IMR-90 (cell line): ENCODE measurements at regions of chr17 and their contacts with region 1.

Region 1: GRCh38 chr17:58417300-58418092 is at the start of gene RNF43:
- DNase-seq: peak; percentile 71
- ATAC-seq: peak; percentile 99
- H3K4me3 ChIP-seq: peak within 1 kb of the TSS; percentile 8
- H3K27ac ChIP-seq: no peak within 1 kb of the TSS
- H3K4me1 ChIP-seq: no peaks in the 10 kb centered on the region
- H3K27me3 ChIP-seq: peaks cover 16% of the 10 kb centered on the region
- CTCF ChIP-seq: peak; percentile 81
- POLR2A ChIP-seq: no peak
- RAD21 ChIP-seq: peak; percentile 70
- total RNA-seq, gene RNF43: under 0.01 TPM in 2 replicates

Region 2: GRCh38 chr17:58317421-58318064 is 100.0 kb before region 1 on chr17:
- CTCF ChIA-PET with region 1: interaction called, 21 read pairs
- POLR2A ChIA-PET with region 1: no interaction called
- dilution Hi-C with region 1: no loop called
- in situ Hi-C with region 1: loop called (anchors 5 kb)
- intact Hi-C with region 1: loop called (anchors 1 kb)
- DNase-seq: peak; percentile 75
- ATAC-seq: peak; percentile 90
- H3K4me3 ChIP-seq: no peak overlapping the region
- H3K27ac ChIP-seq: no peak overlapping the region
- H3K4me1 ChIP-seq: no peaks in the 10 kb centered on the region
- H3K27me3 ChIP-seq: no peaks in the 10 kb centered on the region
- CTCF ChIP-seq: peak; percentile 88
- POLR2A ChIP-seq: peak; percentile 42; the same call in 1 of the 2 replicates
- RAD21 ChIP-seq: peak; percentile 96

Region 3: DNA sequence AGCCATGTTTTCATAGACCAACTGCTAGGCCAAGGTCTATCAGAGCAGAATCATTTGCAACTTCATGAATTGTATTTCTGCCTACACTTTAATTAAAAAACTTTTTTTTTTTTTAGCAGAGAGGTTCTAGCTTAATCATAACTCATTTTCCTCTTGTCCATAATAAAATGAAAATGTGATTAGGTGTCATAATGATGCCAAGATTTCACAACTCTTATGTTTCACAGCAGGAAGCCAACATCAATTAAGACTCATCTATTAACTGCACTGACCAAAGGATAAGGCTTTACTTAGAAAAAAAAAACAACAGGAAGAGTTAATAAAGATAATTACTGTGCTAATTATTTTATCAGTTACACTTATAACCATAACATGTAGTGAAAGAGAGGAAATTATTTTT is 18.7 kb after region 1 on chr17:
- CTCF ChIA-PET with region 1: interaction called, 4 read pairs
- POLR2A ChIA-PET with region 1: interaction called, 10 read pairs
- dilution Hi-C with region 1: no loop called
- in situ Hi-C with region 1: no loop called
- intact Hi-C with region 1: no loop called
- DNase-seq: no peak
- ATAC-seq: no peak
- H3K4me3 ChIP-seq: no peak overlapping the region
- H3K27ac ChIP-seq: no peak overlapping the region
- H3K4me1 ChIP-seq: no peaks in the 10 kb centered on the region
- H3K27me3 ChIP-seq: no peaks in the 10 kb centered on the region
- CTCF ChIP-seq: no peak
- POLR2A ChIP-seq: no peak
- RAD21 ChIP-seq: no peak

Region 4: GRCh38 chr17:58513965-58514774 is 96.7 kb after region 1 on chr17 and contains the start of gene MTMR4:
- CTCF ChIA-PET with region 1: no interaction called
- POLR2A ChIA-PET with region 1: no interaction called
- dilution Hi-C with region 1: no loop called
- in situ Hi-C with region 1: no loop called
- intact Hi-C with region 1: no loop called
- DNase-seq: peak; percentile 58
- ATAC-seq: peak; percentile 57
- H3K4me3 ChIP-seq: peak within 1 kb of the TSS; percentile 64
- H3K27ac ChIP-seq: peak within 1 kb of the TSS; percentile 33; the same call in 1 of the 2 replicates
- H3K4me1 ChIP-seq: peaks cover 12% of the 10 kb centered on the region; the same call in 1 of the 2 replicates
- H3K27me3 ChIP-seq: no peaks in the 10 kb centered on the region
- CTCF ChIP-seq: no peak
- POLR2A ChIP-seq: no peak; the same call in 1 of the 2 replicates
- RAD21 ChIP-seq: no peak
- total RNA-seq, gene MTMR4: 42.5 and 60.0 TPM in 2 replicates

Region 5: GRCh38 chr17:59084154-59084553 is 666.7 kb after region 1 on chr17:
- CTCF ChIA-PET with region 1: no interaction called
- POLR2A ChIA-PET with region 1: no interaction called
- dilution Hi-C with region 1: no loop called
- in situ Hi-C with region 1: no loop called
- intact Hi-C with region 1: no loop called
- DNase-seq: no peak
- ATAC-seq: no peak
- H3K4me3 ChIP-seq: no peak overlapping the region
- H3K27ac ChIP-seq: no peak overlapping the region
- H3K4me1 ChIP-seq: no peaks in the 10 kb centered on the region
- H3K27me3 ChIP-seq: no peaks in the 10 kb centered on the region
- CTCF ChIP-seq: no peak
- POLR2A ChIP-seq: no peak
- RAD21 ChIP-seq: no peak